Left colon (tissue), 2 donors: ENCODE measurements at regions of chr1 and their contacts with region 1.

Region 1: DNA sequence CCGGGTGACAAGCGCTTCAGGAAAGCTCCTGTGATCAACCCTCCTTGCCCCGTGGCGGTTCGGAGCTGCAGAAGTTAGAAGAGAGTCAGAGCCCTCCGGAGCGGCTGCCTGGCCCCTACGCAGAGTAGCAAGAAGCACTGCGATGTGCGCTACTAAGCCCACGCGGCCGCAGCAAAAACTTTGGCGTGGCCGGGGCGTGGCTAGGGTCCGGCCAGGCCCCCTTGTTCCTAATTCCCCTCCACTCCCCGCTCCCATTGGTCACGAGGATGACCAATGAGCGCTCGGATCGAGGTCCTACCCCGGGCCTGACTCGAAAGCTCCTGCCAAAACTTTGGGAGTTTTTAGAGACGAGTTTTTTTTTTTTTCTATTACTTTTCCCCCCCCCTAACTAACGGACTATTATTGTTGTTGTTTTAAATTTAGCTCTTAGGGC is at the start of gene HLX:
- DNase-seq: peak; percentile 81 to 91
- ATAC-seq: peak; percentile 59
- total RNA-seq, gene HLX: 3.1 to 12.3 TPM

Region 2: DNA sequence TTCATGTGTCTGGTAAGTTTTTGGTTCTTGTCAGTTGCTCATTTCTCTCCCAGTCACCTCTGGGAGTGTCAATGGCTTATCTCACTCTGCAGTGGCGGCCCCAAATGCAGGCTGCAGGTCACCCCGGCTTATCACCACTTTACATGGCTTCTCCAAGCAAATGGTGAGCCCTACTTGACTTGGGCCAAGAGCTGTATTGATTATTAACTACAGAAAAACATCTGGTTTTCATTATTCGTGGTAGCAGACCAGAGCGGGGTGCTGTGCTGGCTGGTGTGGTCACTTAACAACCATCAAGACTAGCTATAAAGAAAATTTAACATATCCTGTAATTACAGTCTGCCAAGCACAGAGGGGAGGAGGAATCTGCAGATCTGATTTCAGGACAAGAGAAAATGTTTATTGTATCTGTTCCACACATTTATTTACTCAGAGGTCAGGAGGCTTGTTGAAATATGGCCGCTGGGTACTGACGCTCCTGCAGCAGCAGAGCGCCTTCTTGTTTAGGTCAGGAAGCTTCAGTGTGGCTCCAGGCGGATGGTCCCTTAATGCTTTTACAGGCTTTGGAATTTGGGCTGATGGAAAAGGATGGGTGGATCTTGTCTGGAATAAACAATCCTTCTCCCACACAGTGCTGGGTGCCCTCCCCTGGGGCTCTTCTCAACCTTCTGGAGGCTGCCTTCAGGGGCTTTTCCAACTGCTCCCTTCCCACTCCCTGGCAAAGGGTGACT is 88.0 kb after region 1 on chr1:
- intact Hi-C with region 1: no loop called
- DNase-seq: no peak
- ATAC-seq: no peak

Region 3: GRCh38 chr1:221203224-221204054 is 324.3 kb after region 1 on chr1:
- intact Hi-C with region 1: loop called in 1 of 2 experiments (anchors 10 kb)
- DNase-seq: peak; percentile 50 to 74
- ATAC-seq: no peak

Region 4: DNA sequence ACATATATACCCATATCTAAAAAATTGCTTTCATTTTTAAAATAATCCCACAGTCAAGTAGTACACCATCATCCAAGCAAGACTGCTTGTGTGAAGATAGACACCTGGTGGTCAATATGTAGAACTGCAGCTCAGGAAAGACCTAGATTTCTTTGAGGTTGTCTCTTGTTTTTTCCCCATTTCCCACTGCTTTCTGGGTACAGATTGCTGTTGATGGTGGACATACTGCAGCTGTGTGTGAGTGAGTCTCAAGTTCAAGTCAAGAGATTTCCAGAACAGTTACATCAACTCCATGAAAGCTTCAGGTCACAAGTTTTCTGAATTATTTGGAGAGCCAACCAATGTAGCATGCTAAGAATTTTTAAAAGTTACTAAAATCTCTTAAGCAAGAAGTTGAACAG is 556.4 kb after region 1 on chr1:
- intact Hi-C with region 1: loop called in 1 of 2 experiments (anchors 5 kb)
- DNase-seq: no peak
- ATAC-seq: no peak